ENCODE measurements at regions of chr13 and their contacts with region 1.

Region 1: DNA sequence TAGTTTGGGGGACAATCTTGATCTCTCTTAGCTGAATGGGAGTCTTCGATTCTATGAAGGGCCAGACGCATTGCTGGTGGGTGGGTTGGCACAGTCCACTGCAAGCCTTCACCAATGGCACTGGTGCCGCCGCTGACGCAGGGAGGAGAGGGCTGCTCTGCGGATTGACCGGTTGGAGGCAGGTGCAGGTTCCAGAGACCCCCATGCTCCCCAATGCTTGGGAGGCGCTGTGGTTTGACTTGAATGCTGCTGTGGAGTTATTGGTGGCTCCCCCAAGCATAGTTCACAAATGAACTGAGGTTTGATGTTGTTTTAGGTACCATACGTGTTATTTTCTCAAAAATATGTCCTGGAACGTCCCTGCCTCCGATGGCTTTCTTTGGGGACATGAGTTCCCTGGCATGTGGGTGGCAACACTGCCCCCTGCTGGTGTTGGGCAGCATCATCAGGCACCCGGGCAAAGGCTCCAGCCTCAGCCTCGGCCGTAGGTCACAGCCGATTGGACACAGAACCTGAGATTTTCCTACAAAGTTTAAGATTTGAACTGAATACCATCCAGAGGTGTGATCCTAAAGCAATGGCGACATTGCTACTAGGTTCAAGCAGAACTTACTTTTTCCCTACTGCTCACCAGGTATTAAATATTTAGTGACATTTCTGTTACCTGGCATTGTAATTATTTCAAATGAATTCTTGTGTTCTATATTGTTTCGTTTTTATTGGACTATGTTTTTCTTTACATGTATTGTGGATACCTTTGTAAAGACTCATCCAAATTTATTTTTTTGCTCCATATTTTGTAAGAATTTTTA is 95.5 kb downstream of the ANKRD10 start:
- DNase-seq: peak; percentile 54
- ATAC-seq: peak; percentile 93
- H3K4me3 ChIP-seq: no peak overlapping the region
- H3K27ac ChIP-seq: no peak overlapping the region
- H3K4me1 ChIP-seq: peaks cover 17% of the 10 kb centered on the region
- H3K27me3 ChIP-seq: peaks cover 1 to 11% of the 10 kb centered on the region in 2 experiments; a peak in 2 of 5 replicates
- CTCF ChIP-seq: peak; percentile 94
- EP300 ChIP-seq: no peak
- POLR2A ChIP-seq: no peak
- RAD21 ChIP-seq: peak; percentile 82

Region 2: GRCh38 chr13:110216398-110217041 is 602.9 kb before region 1 on chr13:
- CTCF ChIA-PET with region 1: no interaction called
- POLR2A ChIA-PET with region 1: no interaction called
- in situ Hi-C with region 1: loop called (anchors 25 kb)
- intact Hi-C with region 1: no loop called
- DNase-seq: no peak
- ATAC-seq: no peak
- H3K4me3 ChIP-seq: no peak overlapping the region
- H3K27ac ChIP-seq: no peak overlapping the region
- H3K4me1 ChIP-seq: no peaks in the 10 kb centered on the region
- H3K27me3 ChIP-seq: peaks cover 0 to 17% of the 10 kb centered on the region in 2 experiments; a peak in 1 of 5 replicates
- CTCF ChIP-seq: no peak
- EP300 ChIP-seq: no peak
- POLR2A ChIP-seq: no peak
- RAD21 ChIP-seq: no peak

Region 3: GRCh38 chr13:110593430-110594130 is 225.8 kb before region 1 on chr13:
- CTCF ChIA-PET with region 1: interaction called, 12 read pairs
- POLR2A ChIA-PET with region 1: no interaction called
- in situ Hi-C with region 1: loop called (anchors 5 kb)
- intact Hi-C with region 1: loop called (anchors 1 kb)
- DNase-seq: peak; percentile 65
- ATAC-seq: peak; percentile 89
- H3K4me3 ChIP-seq: no peak overlapping the region
- H3K27ac ChIP-seq: no peak overlapping the region
- H3K4me1 ChIP-seq: peaks cover 19% of the 10 kb centered on the region
- H3K27me3 ChIP-seq: no peaks in the 10 kb centered on the region
- CTCF ChIP-seq: peak; percentile 75
- EP300 ChIP-seq: no peak
- POLR2A ChIP-seq: no peak
- RAD21 ChIP-seq: peak; percentile 36; the same call in 1 of the 2 replicates

Region 4: GRCh38 chr13:110680851-110681250 is 138.6 kb before region 1 on chr13:
- CTCF ChIA-PET with region 1: interaction called, 15 read pairs
- POLR2A ChIA-PET with region 1: no interaction called
- in situ Hi-C with region 1: loop called (anchors 10 kb)
- intact Hi-C with region 1: loop called (anchors 1 kb)
- DNase-seq: peak; percentile 41
- ATAC-seq: peak; percentile 49
- H3K4me3 ChIP-seq: no peak overlapping the region
- H3K27ac ChIP-seq: no peak overlapping the region
- H3K4me1 ChIP-seq: peaks cover 26% of the 10 kb centered on the region
- H3K27me3 ChIP-seq: no peaks in the 10 kb centered on the region
- CTCF ChIP-seq: peak; percentile 40
- EP300 ChIP-seq: no peak
- POLR2A ChIP-seq: no peak
- RAD21 ChIP-seq: peak; percentile 49; the same call in 1 of the 2 replicates

Region 5: DNA sequence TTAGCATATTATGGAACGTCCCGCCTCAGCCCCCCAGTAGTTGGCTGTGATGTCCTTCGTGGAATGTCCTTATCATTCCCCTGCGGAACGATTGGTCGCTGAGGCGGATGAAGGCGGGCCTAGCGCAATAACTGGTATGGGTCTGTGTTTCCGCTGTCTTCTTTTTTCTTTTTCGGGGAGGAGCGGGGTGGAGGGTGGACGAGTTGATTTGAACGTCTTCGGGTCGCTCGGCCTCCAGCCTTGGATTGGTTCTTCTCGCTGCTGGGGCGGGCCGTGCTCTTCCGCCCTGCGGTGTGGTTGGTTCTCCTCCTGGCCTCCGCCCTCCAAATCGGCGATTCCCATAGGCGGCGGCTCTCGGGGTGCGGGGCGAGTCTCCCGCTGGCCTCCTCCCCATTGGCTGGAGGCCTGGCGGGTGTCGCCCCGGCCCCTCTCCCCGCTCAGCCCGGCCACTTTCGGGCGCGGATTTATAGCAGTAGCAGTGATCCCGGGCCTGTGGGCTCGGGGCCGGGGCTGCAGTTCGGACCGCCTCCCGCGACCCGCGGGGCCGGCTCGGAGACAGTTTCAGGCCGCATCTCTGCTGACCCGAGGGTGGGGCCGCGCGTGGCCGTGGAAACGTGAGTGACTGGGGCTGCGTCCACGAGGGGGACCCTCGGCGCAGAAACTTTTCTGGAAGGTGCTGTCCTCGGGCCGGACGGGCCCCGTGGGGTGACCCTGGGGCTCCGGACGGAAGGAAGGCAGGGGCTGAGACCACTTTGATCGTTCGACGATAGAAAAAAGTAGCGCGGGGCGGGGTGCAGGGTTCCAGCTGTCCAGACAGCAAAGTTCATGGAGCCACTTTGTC is 103.8 kb before region 1 on chr13:
- CTCF ChIA-PET with region 1: no interaction called
- POLR2A ChIA-PET with region 1: no interaction called
- in situ Hi-C with region 1: no loop called
- intact Hi-C with region 1: loop called (anchors 10 kb)
- DNase-seq: peak; percentile 99
- ATAC-seq: peak; percentile 75
- H3K4me3 ChIP-seq: peak overlapping the region; percentile 76 to 98 (median 96)
- H3K27ac ChIP-seq: peak overlapping the region; percentile 89
- H3K4me1 ChIP-seq: peaks cover 16% of the 10 kb centered on the region
- H3K27me3 ChIP-seq: no peaks in the 10 kb centered on the region; a peak in 1 of 5 replicates
- CTCF ChIP-seq: peak; percentile 31; the same call in 1 of the 2 replicates
- EP300 ChIP-seq: no peak
- POLR2A ChIP-seq: no peak; a peak in 1 of 4 replicates
- RAD21 ChIP-seq: no peak; the same call in 1 of the 2 replicates

Region 6: GRCh38 chr13:110831447-110832204 is 12.2 kb after region 1 on chr13:
- CTCF ChIA-PET with region 1: no interaction called
- POLR2A ChIA-PET with region 1: no interaction called
- in situ Hi-C with region 1: no loop called
- intact Hi-C with region 1: loop called (anchors 1 kb)
- DNase-seq: no peak
- ATAC-seq: peak; percentile 47
- H3K4me3 ChIP-seq: no peak overlapping the region
- H3K27ac ChIP-seq: no peak overlapping the region
- H3K4me1 ChIP-seq: no peaks in the 10 kb centered on the region
- H3K27me3 ChIP-seq: peaks cover 1 to 47% of the 10 kb centered on the region in 2 experiments; a peak in 4 of 5 replicates
- CTCF ChIP-seq: no peak
- EP300 ChIP-seq: no peak
- POLR2A ChIP-seq: no peak
- RAD21 ChIP-seq: no peak

Region 7: GRCh38 chr13:110925023-110925612 is 105.7 kb after region 1 on chr13:
- CTCF ChIA-PET with region 1: no interaction called
- POLR2A ChIA-PET with region 1: no interaction called
- in situ Hi-C with region 1: no loop called
- intact Hi-C with region 1: loop called (anchors 10 kb)
- DNase-seq: no peak
- ATAC-seq: no peak
- H3K4me3 ChIP-seq: no peak overlapping the region
- H3K27ac ChIP-seq: no peak overlapping the region
- H3K4me1 ChIP-seq: 0 out of 2 replicates have a peak, but pooled peaks cover 9% of the 10 kb centered on the region
- H3K27me3 ChIP-seq: peaks cover 0 to 26% of the 10 kb centered on the region in 2 experiments; a peak in 3 of 5 replicates
- CTCF ChIP-seq: peak; percentile 69
- EP300 ChIP-seq: no peak
- POLR2A ChIP-seq: no peak
- RAD21 ChIP-seq: 0 out of 2 replicates have a peak, but pooled peaks have one; percentile 27